ENCODE measurements at regions of chr5 and their contacts with region 1.

Region 1: DNA sequence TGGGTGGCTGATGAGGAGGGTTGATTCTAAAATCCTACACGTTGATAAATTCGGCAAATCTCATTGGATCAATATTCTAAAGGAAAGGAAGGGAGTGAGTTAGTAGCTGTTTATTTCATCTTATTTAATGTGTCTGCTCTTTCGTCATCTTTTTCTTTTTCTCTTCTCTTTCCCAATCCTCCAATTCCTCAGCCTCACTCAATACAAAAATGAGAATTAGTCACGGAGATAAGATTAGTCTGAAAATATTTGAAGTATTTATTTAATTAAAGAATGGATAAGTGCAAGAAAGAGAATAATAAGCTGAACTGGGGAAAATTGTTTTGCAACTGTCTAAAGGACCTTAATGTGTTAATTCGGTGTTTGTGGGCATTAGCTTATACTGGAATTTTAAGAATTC is 1095.1 kb downstream of the DTWD2 start:
- DNase-seq: no peak
- ATAC-seq: peak; percentile 17; the same call in 1 of the 2 replicates
- H3K4me3 ChIP-seq: no peak overlapping the region
- H3K27ac ChIP-seq: no peak overlapping the region; the same call in 1 of the 2 replicates
- H3K4me1 ChIP-seq: peaks cover 3% of the 10 kb centered on the region
- H3K27me3 ChIP-seq: no peaks in the 10 kb centered on the region
- CTCF ChIP-seq: no peak
- POLR2A ChIP-seq: no peak
- RAD21 ChIP-seq: no peak

Region 2: GRCh38 chr5:117803533-117803932 is 89.7 kb before region 1 on chr5:
- CTCF ChIA-PET with region 1: no interaction called
- POLR2A ChIA-PET with region 1: no interaction called
- dilution Hi-C with region 1: no loop called
- in situ Hi-C with region 1: no loop called
- intact Hi-C with region 1: loop called (anchors 5 kb)
- DNase-seq: peak; percentile 90
- ATAC-seq: peak; percentile 94
- H3K4me3 ChIP-seq: no peak overlapping the region
- H3K27ac ChIP-seq: peak overlapping the region; percentile 76; the same call in 1 of the 2 replicates
- H3K4me1 ChIP-seq: peaks cover 2% of the 10 kb centered on the region
- H3K27me3 ChIP-seq: no peaks in the 10 kb centered on the region
- CTCF ChIP-seq: no peak
- POLR2A ChIP-seq: no peak
- RAD21 ChIP-seq: no peak